Psoas muscle (tissue), 8 donors: ENCODE measurements at regions of chr16 and their contacts with region 1.

Region 1: GRCh38 chr16:7456211-7456610 is 123.6 kb downstream of the RBFOX1 start:
- DNase-seq: no peak
- ATAC-seq: no peak
- H3K4me3 ChIP-seq: no peak overlapping the region
- H3K27ac ChIP-seq: no peak overlapping the region
- H3K4me1 ChIP-seq: peaks cover 17% of the 10 kb centered on the region
- H3K27me3 ChIP-seq: no peaks in the 10 kb centered on the region
- CTCF ChIP-seq: no peak

Region 2: GRCh38 chr16:7303052-7303610 is 153.1 kb before region 1 on chr16:
- intact Hi-C with region 1: no loop called
- DNase-seq: peak in 1 of 2 donors; percentile 55
- ATAC-seq: peak; percentile 59 to 89 (median 69)
- H3K4me3 ChIP-seq: peak overlapping the region; percentile 65
- H3K27ac ChIP-seq: no peak overlapping the region
- H3K4me1 ChIP-seq: no peaks in the 10 kb centered on the region
- H3K27me3 ChIP-seq: peaks cover 0 to 10% (median 0%) of the 10 kb centered on the region in 3 donors
- CTCF ChIP-seq: peak; percentile 15

Region 3: GRCh38 chr16:7497691-7498090 is 41.5 kb after region 1 on chr16:
- intact Hi-C with region 1: loop called in 1 of 2 experiments (anchors 5 kb)
- DNase-seq: no peak
- ATAC-seq: peak; percentile 45 to 72 (median 64)
- H3K4me3 ChIP-seq: peak overlapping the region; percentile 11
- H3K27ac ChIP-seq: peak overlapping the region; percentile 78
- H3K4me1 ChIP-seq: peaks cover 57% of the 10 kb centered on the region
- H3K27me3 ChIP-seq: no peaks in the 10 kb centered on the region
- CTCF ChIP-seq: no peak

Region 4: GRCh38 chr16:7508656-7509055 is 52.4 kb after region 1 on chr16:
- intact Hi-C with region 1: no loop called
- DNase-seq: no peak
- ATAC-seq: no peak
- H3K4me3 ChIP-seq: no peak overlapping the region
- H3K27ac ChIP-seq: no peak overlapping the region
- H3K4me1 ChIP-seq: peaks cover 65% of the 10 kb centered on the region
- H3K27me3 ChIP-seq: no peaks in the 10 kb centered on the region
- CTCF ChIP-seq: no peak

Region 5: DNA sequence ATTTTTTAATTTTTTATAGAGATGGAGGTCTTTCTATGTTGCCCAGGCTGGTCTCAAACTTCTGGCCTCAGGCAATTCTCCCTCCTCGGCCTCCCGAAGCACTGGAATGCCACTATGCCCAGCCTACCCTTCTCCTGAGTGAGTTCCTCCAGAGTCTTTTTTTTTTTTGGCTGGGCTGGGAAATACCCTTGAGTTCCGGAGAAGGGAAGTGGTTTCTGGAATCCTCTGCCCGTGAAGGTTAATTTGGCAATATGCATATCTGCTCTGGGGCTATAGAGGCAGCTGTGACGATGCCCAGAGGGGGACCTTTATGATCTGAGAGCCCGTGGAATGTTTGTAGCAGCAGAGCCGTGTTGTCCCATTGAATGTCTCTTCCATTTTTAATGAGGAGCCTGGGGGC is 93.9 kb after region 1 on chr16:
- intact Hi-C with region 1: no loop called
- DNase-seq: no peak
- ATAC-seq: no peak
- H3K4me3 ChIP-seq: no peak overlapping the region
- H3K27ac ChIP-seq: no peak overlapping the region
- H3K4me1 ChIP-seq: peaks cover 6% of the 10 kb centered on the region
- H3K27me3 ChIP-seq: no peaks in the 10 kb centered on the region
- CTCF ChIP-seq: no peak